ENCODE measurements at regions of chr12 and their contacts with region 1.

Region 1: DNA sequence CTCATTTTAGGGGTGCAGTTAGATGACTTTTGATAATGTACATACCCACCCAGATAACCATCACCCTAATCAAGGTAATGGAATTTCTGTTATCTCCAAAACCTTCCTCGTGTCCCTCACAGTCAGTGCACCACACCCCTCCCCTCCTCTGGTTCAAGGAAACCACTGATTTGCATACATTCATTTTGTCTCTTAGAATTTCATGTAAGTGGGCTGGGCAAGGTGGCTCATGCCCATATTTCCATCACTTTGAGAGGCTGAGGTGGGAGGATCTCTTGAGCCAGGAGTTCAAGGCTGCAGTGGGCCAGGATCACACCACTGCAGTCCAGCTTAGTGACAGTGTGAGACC is 15.7 kb downstream of the ADIPOR2 start:
- DNase-seq: no peak
- H3K4me3 ChIP-seq: no peak overlapping the region
- H3K4me3 Mint-ChIP-seq: no peak overlapping the region
- H3K27ac ChIP-seq: peak overlapping the region in 1 of 2 donors; percentile 27
- H3K27ac Mint-ChIP-seq: peak overlapping the region; percentile 43 to 77 (median 65)
- H3K4me1 ChIP-seq: peaks cover 17 to 55% of the 10 kb centered on the region in 2 donors
- H3K4me1 Mint-ChIP-seq: peaks cover 53% of the 10 kb centered on the region
- H3K27me3 ChIP-seq: no peaks in the 10 kb centered on the region
- H3K27me3 Mint-ChIP-seq: no peaks in the 10 kb centered on the region
- CTCF ChIP-seq: no peak

Region 2: GRCh38 chr12:1650260-1650977 is 56.2 kb before region 1 on chr12:
- intact Hi-C with region 1: loop called in 1 of 2 experiments (anchors 10 kb)
- DNase-seq: no peak
- H3K4me3 ChIP-seq: no peak overlapping the region
- H3K4me3 Mint-ChIP-seq: no peak overlapping the region
- H3K27ac ChIP-seq: no peak overlapping the region
- H3K27ac Mint-ChIP-seq: no peak overlapping the region
- H3K4me1 ChIP-seq: peaks cover 13 to 15% of the 10 kb centered on the region in 2 donors
- H3K4me1 Mint-ChIP-seq: peaks cover 28% of the 10 kb centered on the region
- H3K27me3 ChIP-seq: no peaks in the 10 kb centered on the region
- H3K27me3 Mint-ChIP-seq: peaks cover 0 to 3% (median under 1%) of the 10 kb centered on the region in 3 donors
- CTCF ChIP-seq: no peak

Region 3: GRCh38 chr12:1661553-1662335 is 44.9 kb before region 1 on chr12:
- intact Hi-C with region 1: loop called (anchors 5 to 10 kb)
- DNase-seq: peak; percentile 82 to 92 (median 91)
- H3K4me3 ChIP-seq: peak overlapping the region; percentile 37 to 73 (median 40)
- H3K4me3 Mint-ChIP-seq: peak overlapping the region; percentile 73 to 86
- H3K27ac ChIP-seq: peak overlapping the region in 1 of 2 donors; percentile 40
- H3K27ac Mint-ChIP-seq: peak overlapping the region in 5 of 7 donors; percentile 42 to 87 (median 54)
- H3K4me1 ChIP-seq: peaks cover 18 to 26% of the 10 kb centered on the region in 2 donors
- H3K4me1 Mint-ChIP-seq: peaks cover 34% of the 10 kb centered on the region
- H3K27me3 ChIP-seq: no peaks in the 10 kb centered on the region
- H3K27me3 Mint-ChIP-seq: peaks cover 0 to 2% (median 0%) of the 10 kb centered on the region in 3 donors
- CTCF ChIP-seq: no peak

Region 4: GRCh38 chr12:1676043-1676442 is 30.6 kb before region 1 on chr12:
- intact Hi-C with region 1: no loop called
- DNase-seq: no peak
- H3K4me3 ChIP-seq: no peak overlapping the region
- H3K4me3 Mint-ChIP-seq: no peak overlapping the region
- H3K27ac ChIP-seq: no peak overlapping the region
- H3K27ac Mint-ChIP-seq: no peak overlapping the region
- H3K4me1 ChIP-seq: no peaks in the 10 kb centered on the region
- H3K4me1 Mint-ChIP-seq: peaks cover 3% of the 10 kb centered on the region
- H3K27me3 ChIP-seq: no peaks in the 10 kb centered on the region
- H3K27me3 Mint-ChIP-seq: peaks cover 0 to 2% (median 0%) of the 10 kb centered on the region in 3 donors
- CTCF ChIP-seq: no peak

Region 5: DNA sequence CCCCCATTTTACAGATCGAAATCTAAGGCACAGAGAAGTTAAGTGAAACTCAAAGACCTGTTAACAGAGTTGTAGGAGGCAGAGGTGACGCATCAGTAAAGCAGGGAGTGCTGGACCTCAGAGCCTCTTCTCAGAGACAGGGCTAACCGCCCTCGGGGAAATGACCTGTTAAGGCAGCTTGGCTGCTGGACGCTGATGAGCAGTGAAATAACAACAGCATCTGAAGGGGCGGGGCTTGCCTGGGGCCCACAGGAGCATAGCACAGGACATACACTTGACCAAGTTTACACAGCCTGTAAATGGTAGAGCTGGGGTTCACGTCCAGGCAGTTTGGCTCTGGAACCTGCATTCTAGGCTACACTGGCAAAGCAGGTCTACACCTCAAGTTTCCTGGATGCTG is 153.0 kb after region 1 on chr12:
- intact Hi-C with region 1: no loop called
- DNase-seq: no peak
- H3K4me3 ChIP-seq: no peak overlapping the region
- H3K4me3 Mint-ChIP-seq: no peak overlapping the region
- H3K27ac ChIP-seq: no peak overlapping the region
- H3K27ac Mint-ChIP-seq: no peak overlapping the region
- H3K4me1 ChIP-seq: no peaks in the 10 kb centered on the region
- H3K4me1 Mint-ChIP-seq: peaks cover 2% of the 10 kb centered on the region
- H3K27me3 ChIP-seq: peaks cover 0 to 13% of the 10 kb centered on the region in 2 donors
- H3K27me3 Mint-ChIP-seq: peaks cover 9 to 22% (median 14%) of the 10 kb centered on the region in 3 donors
- CTCF ChIP-seq: no peak